ENCODE measurements at regions of chr12 and their contacts with region 1.

Region 1: DNA sequence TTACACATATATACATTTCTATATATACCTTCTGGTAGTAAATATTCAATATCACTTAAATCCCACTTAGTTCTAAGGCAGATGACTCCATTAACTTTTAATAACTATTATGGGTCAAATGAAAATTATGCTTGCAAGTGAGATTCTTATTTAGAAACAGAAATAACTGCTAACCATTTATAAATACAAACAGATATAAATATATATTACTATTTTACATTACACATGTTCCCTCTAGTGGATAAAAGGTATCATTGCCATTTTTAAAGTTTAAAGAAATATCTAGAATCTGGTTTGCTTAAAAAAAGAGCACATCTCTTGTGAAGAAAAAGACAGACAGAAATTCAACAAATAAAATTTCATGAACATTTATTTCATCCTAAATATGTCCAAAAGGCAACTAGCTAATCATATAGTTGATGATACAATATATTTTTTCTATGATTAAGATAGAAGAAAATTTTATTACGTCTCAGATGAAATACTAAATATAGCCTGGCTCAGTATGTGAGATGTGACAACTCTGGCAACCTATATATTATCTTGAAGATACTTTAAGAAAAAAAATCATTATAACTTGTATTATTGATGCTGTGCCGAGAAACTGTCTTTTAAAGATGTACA is 11.7 kb upstream of the RAD51AP1 start:
- DNase-seq: no peak
- ATAC-seq: no peak
- H3K4me3 ChIP-seq: no peak overlapping the region
- H3K27ac ChIP-seq: no peak overlapping the region
- H3K4me1 ChIP-seq: no peaks in the 10 kb centered on the region
- H3K27me3 ChIP-seq: no peaks in the 10 kb centered on the region
- CTCF ChIP-seq: peak; percentile 51 to 79 (median 62)
- POLR2A ChIP-seq: no peak

Region 2: GRCh38 chr12:4307593-4308333 is 219.3 kb before region 1 on chr12:
- intact Hi-C with region 1: loop called in 4 of 10 experiments (anchors 5 to 10 kb)
- DNase-seq: peak in 4 of 5 donors; percentile 69 to 77 (median 72)
- ATAC-seq: peak; percentile 75 to 89 (median 86)
- H3K4me3 ChIP-seq: peak overlapping the region in 3 of 12 donors; percentile 10 to 32 (median 15)
- H3K27ac ChIP-seq: peak overlapping the region in 10 of 12 donors; percentile 17 to 72 (median 41)
- H3K4me1 ChIP-seq: peaks cover 3 to 54% (median 30%) of the 10 kb centered on the region in 12 donors
- H3K27me3 ChIP-seq: no peaks in the 10 kb centered on the region
- CTCF ChIP-seq: peak; percentile 56 to 80 (median 68)
- POLR2A ChIP-seq: no peak

Region 3: GRCh38 chr12:4356041-4356327 is 171.1 kb before region 1 on chr12:
- intact Hi-C with region 1: loop called (anchors 2 to 10 kb)
- DNase-seq: peak in 3 of 5 donors; percentile 17 to 40 (median 25)
- ATAC-seq: peak in 2 of 4 donors; percentile 12 to 50
- H3K4me3 ChIP-seq: no peak overlapping the region
- H3K27ac ChIP-seq: peak overlapping the region in 5 of 12 donors; percentile 11 to 64 (median 50)
- H3K4me1 ChIP-seq: peaks cover 0 to 10% (median 0%) of the 10 kb centered on the region in 12 donors
- H3K27me3 ChIP-seq: peaks cover 0 to 2% (median 0%) of the 10 kb centered on the region in 9 donors
- CTCF ChIP-seq: peak; percentile 17 to 51 (median 32)
- POLR2A ChIP-seq: no peak

Region 4: GRCh38 chr12:4421590-4422031 is 105.4 kb before region 1 on chr12:
- intact Hi-C with region 1: loop called in 9 of 10 experiments (anchors 2 to 5 kb)
- DNase-seq: no peak
- ATAC-seq: no peak
- H3K4me3 ChIP-seq: no peak overlapping the region
- H3K27ac ChIP-seq: no peak overlapping the region
- H3K4me1 ChIP-seq: peaks cover 0 to 16% (median 0%) of the 10 kb centered on the region in 12 donors
- H3K27me3 ChIP-seq: peaks cover 0 to 9% (median 0%) of the 10 kb centered on the region in 9 donors
- CTCF ChIP-seq: peak; percentile 39 to 78 (median 68)
- POLR2A ChIP-seq: no peak

Region 5: GRCh38 chr12:4506870-4507269 is 20.2 kb before region 1 on chr12:
- intact Hi-C with region 1: no loop called
- DNase-seq: no peak
- ATAC-seq: no peak
- H3K4me3 ChIP-seq: no peak overlapping the region
- H3K27ac ChIP-seq: no peak overlapping the region
- H3K4me1 ChIP-seq: peaks cover 0 to 11% (median 0%) of the 10 kb centered on the region in 12 donors
- H3K27me3 ChIP-seq: no peaks in the 10 kb centered on the region
- CTCF ChIP-seq: no peak
- POLR2A ChIP-seq: no peak

Region 6: DNA sequence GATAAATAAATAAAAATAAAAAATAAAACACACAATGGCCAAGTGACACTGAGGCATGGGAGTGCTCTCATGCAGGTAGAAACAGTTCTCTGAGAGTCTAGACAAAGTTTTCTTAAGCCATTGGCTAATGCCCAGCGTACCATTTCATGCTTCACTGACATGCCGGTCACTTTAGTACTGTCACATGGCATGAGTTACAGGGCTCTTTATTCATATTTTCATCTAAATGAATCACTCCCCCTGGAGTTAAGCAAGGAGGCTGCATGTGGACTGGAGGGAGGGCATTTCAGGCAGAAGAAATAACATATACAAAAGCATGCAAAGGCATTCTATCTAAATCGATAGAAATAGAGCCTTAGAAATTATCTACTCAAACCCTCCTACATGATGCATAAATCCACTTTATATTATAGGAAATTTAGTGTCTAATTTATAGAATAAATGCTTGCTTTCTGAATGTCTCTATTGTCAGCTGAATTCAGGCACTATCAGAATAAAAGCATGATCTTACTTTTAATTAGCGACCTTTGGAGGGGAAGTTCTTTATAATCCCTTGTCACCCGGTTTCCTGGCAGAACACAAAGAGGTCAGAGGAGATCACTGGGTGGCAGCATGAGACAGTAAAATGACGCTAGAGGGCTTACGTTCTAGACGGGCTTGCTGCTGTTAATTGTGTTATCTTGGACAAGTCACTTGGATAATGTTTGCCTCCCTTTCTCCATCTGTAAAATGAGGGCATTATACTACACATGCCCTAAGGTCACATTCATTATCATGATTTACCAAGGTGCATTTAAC is 52.5 kb after region 1 on chr12:
- intact Hi-C with region 1: no loop called
- DNase-seq: no peak
- ATAC-seq: peak in 1 of 4 donors; percentile 44
- H3K4me3 ChIP-seq: no peak overlapping the region
- H3K27ac ChIP-seq: peak overlapping the region in 1 of 12 donors; percentile 2
- H3K4me1 ChIP-seq: peaks cover 0 to 4% (median 0%) of the 10 kb centered on the region in 12 donors
- H3K27me3 ChIP-seq: no peaks in the 10 kb centered on the region
- CTCF ChIP-seq: peak in 4 of 12 donors; percentile 13 to 35 (median 28)
- POLR2A ChIP-seq: no peak

Region 7: GRCh38 chr12:4918950-4919660 is 392.1 kb after region 1 on chr12:
- intact Hi-C with region 1: no loop called
- DNase-seq: no peak
- ATAC-seq: no peak
- H3K4me3 ChIP-seq: no peak overlapping the region
- H3K27ac ChIP-seq: no peak overlapping the region
- H3K4me1 ChIP-seq: no peaks in the 10 kb centered on the region
- H3K27me3 ChIP-seq: peaks cover 0 to 47% (median 4%) of the 10 kb centered on the region in 9 donors
- CTCF ChIP-seq: no peak
- POLR2A ChIP-seq: no peak